Activated T-helper 2 cell treated with anti-CD3 and anti-CD28 coated beads, Interferon-gamma antibody, Interleukin-2, Interleukin-4, amounts not matched to agents 10 μg/mL and 5 μg/mL and 100 μg/mL, durations not matched to agents 14 hours and 24 hours and 36 hours (primary cell): ENCODE measurements at regions of chr1 and their contacts with region 1.

Region 1: GRCh38 chr1:118987468-118988185 is 516 bp downstream of the TBX15 start:
- DNase-seq: no peak
- H3K4me3 Mint-ChIP-seq: no peak overlapping the region
- H3K27ac Mint-ChIP-seq: no peak overlapping the region
- H3K4me1 Mint-ChIP-seq: peaks cover 5% of the 10 kb centered on the region
- H3K27me3 Mint-ChIP-seq: peaks cover 95% of the 10 kb centered on the region

Region 2: GRCh38 chr1:119001181-119002018 is 13.8 kb after region 1 on chr1:
- intact Hi-C with region 1: loop called (anchors 2 kb)
- DNase-seq: no peak
- H3K4me3 Mint-ChIP-seq: peak overlapping the region; percentile 40
- H3K27ac Mint-ChIP-seq: no peak overlapping the region
- H3K4me1 Mint-ChIP-seq: peaks cover 10% of the 10 kb centered on the region
- H3K27me3 Mint-ChIP-seq: peaks cover 83% of the 10 kb centered on the region

Region 3: DNA sequence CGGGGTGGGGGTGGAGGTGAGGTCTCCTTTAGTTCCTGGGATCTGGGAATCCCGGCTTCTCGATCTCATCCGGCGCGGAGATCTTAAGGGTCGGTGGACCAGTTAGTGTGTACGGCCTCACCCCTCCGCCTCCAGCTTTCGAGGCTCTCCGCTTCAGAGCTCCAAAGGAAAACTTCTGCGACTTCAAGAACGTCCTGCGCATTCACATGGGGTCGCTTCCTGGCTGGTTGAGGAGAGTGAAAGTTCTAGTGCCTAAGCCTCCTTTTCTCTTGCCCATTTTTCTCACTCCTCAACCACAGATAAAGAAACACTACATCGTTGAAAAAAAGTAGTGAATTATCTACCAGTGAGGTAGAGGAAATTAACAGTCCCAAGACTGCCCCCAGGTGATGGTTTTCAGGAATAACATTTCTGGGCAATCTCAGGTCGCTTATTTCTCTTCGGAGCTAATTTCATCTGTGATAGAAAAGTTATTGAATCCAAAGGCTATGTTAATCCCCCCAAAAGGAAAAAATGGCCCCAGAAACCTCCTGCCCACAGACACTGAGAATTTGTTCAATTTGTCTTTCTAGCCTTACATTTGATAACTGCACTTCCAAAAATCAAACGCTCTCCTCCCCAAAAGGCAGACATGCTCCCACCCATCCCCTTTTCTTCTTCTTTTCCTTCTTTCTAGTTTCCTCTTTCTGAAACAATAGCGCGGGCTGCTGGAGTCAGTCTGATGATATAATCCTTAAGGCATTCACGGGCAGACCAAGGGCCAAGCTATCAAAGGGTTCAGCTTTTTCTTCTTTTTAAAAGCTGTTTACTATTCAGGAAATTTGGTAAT is 21.1 kb after region 1 on chr1:
- intact Hi-C with region 1: loop called (anchors 2 kb)
- DNase-seq: no peak
- H3K4me3 Mint-ChIP-seq: no peak overlapping the region
- H3K27ac Mint-ChIP-seq: no peak overlapping the region
- H3K4me1 Mint-ChIP-seq: peaks cover 5% of the 10 kb centered on the region
- H3K27me3 Mint-ChIP-seq: peaks cover 67% of the 10 kb centered on the region

Region 4: DNA sequence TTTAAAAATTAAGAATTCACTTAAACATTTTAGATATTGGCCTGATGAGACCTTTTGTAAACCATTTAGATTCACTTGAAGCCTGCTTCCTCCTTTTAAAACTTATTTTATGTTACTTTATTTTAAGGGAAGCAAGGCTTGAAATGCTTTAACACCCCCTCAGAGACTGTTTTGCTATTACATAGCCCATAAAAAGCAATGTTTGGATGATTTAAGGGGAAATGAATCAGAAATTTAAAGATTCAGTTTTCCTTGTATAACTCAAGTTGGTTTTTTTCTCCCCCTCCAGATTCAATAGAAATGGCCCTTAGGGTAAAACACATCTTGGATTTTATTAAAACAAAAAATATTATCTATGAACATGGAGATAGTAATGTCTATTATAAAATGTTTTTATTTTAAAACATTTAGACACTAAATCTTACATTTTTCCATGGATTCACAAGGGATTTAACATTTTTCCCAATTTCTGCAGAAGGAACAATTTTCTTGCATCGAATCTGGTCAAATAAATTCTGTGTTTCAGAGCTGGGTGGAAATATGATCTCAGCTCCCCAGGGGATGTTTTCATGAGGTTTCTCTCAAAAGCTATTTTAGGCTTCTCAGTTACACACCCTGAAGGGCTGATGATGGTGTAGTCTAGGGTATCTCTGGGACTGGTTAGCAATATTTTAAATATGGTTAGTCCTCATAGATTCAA is 222.1 kb after region 1 on chr1:
- intact Hi-C with region 1: no loop called
- DNase-seq: no peak
- H3K4me3 Mint-ChIP-seq: no peak overlapping the region
- H3K27ac Mint-ChIP-seq: no peak overlapping the region
- H3K4me1 Mint-ChIP-seq: no peaks in the 10 kb centered on the region
- H3K27me3 Mint-ChIP-seq: no peaks in the 10 kb centered on the region